CD4-positive, alpha-beta T cell (primary cell): ENCODE measurements at regions of chr1 and their contacts with region 1.

Region 1: DNA sequence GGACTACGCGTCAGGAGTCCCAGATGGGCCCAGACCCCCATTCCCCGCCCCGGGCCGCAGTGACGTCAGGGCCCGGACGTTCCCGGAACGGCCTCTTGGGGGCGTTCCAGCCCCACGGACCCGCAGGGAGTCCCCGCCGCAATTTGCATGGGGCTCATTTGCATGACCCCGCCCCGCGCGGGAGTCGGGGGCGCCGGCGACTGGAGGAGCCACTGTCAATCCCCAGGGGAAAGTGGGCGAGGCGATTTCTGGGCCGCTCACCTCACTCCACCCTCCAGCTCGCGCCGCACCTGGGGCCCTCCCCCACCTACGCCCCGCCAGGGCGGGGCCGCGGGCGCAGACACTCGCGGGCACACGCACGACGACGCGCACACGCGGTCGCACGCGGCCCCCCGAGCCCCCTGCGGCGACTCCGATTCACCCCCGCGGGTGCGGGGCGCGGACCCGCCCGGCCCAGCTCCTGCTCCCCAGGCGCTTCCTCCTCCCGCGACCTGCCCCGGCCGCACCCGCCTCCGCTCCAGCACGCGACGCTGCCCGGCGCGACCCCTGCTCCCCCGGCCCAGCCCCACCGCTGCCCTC is 13.2 kb downstream of the AGRN start:
- DNase-seq: peak; percentile 65 to 92 (median 75)
- ATAC-seq: peak; percentile 89
- H3K4me3 ChIP-seq: peak overlapping the region; percentile 40
- H3K4me3 Mint-ChIP-seq: peak overlapping the region; percentile 69
- H3K27ac ChIP-seq: no peak overlapping the region
- H3K27ac Mint-ChIP-seq: no peak overlapping the region
- H3K4me1 ChIP-seq: peaks cover 21% of the 10 kb centered on the region
- H3K4me1 Mint-ChIP-seq: peaks cover 4% of the 10 kb centered on the region
- H3K27me3 ChIP-seq: peaks cover 37 to 40% of the 10 kb centered on the region in 2 experiments
- H3K27me3 Mint-ChIP-seq: peaks cover 35% of the 10 kb centered on the region
- CTCF ChIP-seq: peak; percentile 73

Region 2: GRCh38 chr1:983799-984473 is 49.2 kb before region 1 on chr1:
- CTCF ChIA-PET with region 1: no interaction called
- POLR2A ChIA-PET with region 1: no interaction called
- intact Hi-C with region 1: no loop called
- DNase-seq: peak; percentile 43 to 79 (median 56)
- ATAC-seq: peak; percentile 84
- H3K4me3 ChIP-seq: no peak overlapping the region
- H3K4me3 Mint-ChIP-seq: no peak overlapping the region
- H3K27ac ChIP-seq: no peak overlapping the region
- H3K27ac Mint-ChIP-seq: no peak overlapping the region
- H3K4me1 ChIP-seq: peaks cover 3% of the 10 kb centered on the region
- H3K4me1 Mint-ChIP-seq: no peaks in the 10 kb centered on the region
- H3K27me3 ChIP-seq: peaks cover 0 to 14% of the 10 kb centered on the region in 2 experiments
- H3K27me3 Mint-ChIP-seq: peaks cover 19% of the 10 kb centered on the region
- CTCF ChIP-seq: peak; percentile 93

Region 3: GRCh38 chr1:1059494-1060280 is 26.6 kb after region 1 on chr1:
- CTCF ChIA-PET with region 1: interaction called, 4 read pairs
- POLR2A ChIA-PET with region 1: no interaction called
- intact Hi-C with region 1: loop called in 1 of 2 experiments (anchors 1 kb)
- DNase-seq: peak; percentile 78 to 94 (median 88)
- ATAC-seq: peak; percentile 76
- H3K4me3 ChIP-seq: peak overlapping the region; percentile 24
- H3K4me3 Mint-ChIP-seq: no peak overlapping the region
- H3K27ac ChIP-seq: no peak overlapping the region
- H3K27ac Mint-ChIP-seq: no peak overlapping the region
- H3K4me1 ChIP-seq: peaks cover 41% of the 10 kb centered on the region
- H3K4me1 Mint-ChIP-seq: peaks cover 4% of the 10 kb centered on the region
- H3K27me3 ChIP-seq: peaks cover 44 to 52% of the 10 kb centered on the region in 2 experiments
- H3K27me3 Mint-ChIP-seq: peaks cover 40% of the 10 kb centered on the region
- CTCF ChIP-seq: no peak

Region 4: GRCh38 chr1:1281533-1282321 is 248.6 kb after region 1 on chr1:
- CTCF ChIA-PET with region 1: no interaction called
- POLR2A ChIA-PET with region 1: no interaction called
- intact Hi-C with region 1: no loop called
- DNase-seq: peak in 1 of 14 experiments; percentile 40
- ATAC-seq: no peak
- H3K4me3 ChIP-seq: no peak overlapping the region
- H3K4me3 Mint-ChIP-seq: no peak overlapping the region
- H3K27ac ChIP-seq: no peak overlapping the region
- H3K27ac Mint-ChIP-seq: no peak overlapping the region
- H3K4me1 ChIP-seq: no peaks in the 10 kb centered on the region
- H3K4me1 Mint-ChIP-seq: no peaks in the 10 kb centered on the region
- H3K27me3 ChIP-seq: no peaks in the 10 kb centered on the region
- H3K27me3 Mint-ChIP-seq: no peaks in the 10 kb centered on the region
- CTCF ChIP-seq: no peak

Region 5: DNA sequence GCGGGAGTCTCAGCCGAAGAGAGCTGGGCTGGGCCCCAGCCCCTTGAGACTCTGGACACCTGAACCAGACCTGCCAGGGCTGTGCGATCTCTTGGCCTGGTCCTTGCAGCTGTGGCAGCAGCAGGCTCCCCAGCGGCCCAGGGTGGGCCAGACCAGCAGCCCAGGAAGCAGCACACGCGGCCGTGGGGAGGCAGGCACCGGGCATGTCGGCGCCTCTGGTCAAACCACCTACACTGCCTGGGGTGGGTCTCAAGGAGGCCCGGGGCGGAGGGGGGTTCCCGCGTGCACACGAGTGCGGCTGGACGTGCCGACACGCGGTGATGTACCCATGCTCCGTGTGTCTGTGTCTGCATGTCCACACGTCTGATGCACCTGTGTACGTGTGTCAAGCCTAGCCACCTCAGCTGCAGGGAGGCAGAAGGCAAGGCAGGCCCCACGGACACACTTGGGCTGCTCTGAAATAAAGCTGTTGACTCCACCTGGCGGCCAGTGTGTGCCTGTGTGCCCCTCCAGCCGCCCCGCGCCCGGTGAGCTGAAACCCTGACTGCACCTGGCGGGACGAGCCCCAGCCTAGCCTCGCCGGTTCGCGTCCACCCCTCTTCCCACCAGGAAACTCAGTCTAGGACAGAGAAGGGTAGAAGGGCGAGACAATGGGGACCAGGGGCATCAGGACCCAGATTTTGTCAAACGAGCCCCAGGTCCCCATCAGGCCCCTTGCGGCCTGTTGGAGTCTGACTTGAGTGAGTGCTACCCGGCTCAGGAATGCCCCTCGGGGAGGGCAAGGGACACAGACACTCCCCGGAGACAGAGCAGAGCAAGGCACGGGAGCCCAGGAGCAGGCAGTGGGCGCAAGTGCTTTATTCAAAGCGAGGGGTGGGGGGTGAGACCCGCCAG is 258.7 kb after region 1 on chr1:
- CTCF ChIA-PET with region 1: interaction called, 4 read pairs
- POLR2A ChIA-PET with region 1: no interaction called
- intact Hi-C with region 1: loop called in 1 of 2 experiments (anchors 5 kb)
- DNase-seq: peak; percentile 43 to 84 (median 61)
- ATAC-seq: peak; percentile 81
- H3K4me3 ChIP-seq: no peak overlapping the region
- H3K4me3 Mint-ChIP-seq: no peak overlapping the region
- H3K27ac ChIP-seq: no peak overlapping the region
- H3K27ac Mint-ChIP-seq: no peak overlapping the region
- H3K4me1 ChIP-seq: peaks cover 14% of the 10 kb centered on the region
- H3K4me1 Mint-ChIP-seq: no peaks in the 10 kb centered on the region
- H3K27me3 ChIP-seq: no peaks in the 10 kb centered on the region
- H3K27me3 Mint-ChIP-seq: no peaks in the 10 kb centered on the region
- CTCF ChIP-seq: peak; percentile 42

Region 6: DNA sequence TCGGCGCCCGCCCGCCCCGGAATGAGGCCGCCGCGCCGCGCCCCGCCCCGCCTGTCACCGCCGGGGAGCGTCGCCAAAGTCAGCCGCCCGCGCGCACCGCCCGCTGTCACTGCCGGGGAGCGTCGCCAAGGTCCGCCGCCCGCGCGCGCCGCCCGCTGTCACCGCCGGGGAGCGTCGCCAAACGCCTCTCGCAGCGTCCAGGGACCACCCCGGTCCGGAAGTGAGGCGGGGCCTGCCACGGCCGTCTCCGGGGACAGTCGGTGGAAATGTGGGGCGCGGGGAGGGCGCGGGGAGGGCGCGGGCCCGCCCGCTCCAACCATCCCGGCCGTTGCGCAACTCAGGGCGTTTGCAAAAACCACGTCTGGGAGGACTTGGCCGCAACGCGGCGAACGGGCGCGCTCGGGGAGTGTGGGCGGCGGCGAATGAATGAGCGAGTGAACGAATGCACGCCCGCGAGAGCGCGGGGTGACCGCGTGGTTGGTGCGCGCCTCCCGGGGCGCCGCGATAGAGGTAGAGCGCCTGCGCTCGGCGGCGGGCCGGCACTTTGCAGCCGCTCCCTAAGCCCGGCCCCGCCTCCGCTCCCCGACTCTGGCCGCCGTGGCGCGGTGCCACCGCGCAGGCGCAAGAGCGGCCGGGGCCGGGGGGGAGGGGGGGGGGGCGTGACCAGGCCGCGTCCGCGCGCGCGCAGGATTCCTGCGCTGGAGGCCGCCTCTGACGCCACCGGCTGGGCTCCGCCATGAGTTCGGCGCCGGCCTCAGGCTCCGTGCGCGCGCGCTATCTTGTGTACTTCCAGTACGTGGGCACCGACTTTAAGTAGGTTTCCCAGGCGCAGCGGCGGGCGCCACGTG is 275.0 kb after region 1 on chr1 and contains the starts of genes ACAP3 and PUSL1:
- CTCF ChIA-PET with region 1: no interaction called
- POLR2A ChIA-PET with region 1: no interaction called
- intact Hi-C with region 1: loop called in 1 of 2 experiments (anchors 10 kb)
- DNase-seq: peak; percentile 77 to 96 (median 86)
- ATAC-seq: peak; percentile 74
- H3K4me3 ChIP-seq: peak within 1 kb of the TSS; percentile 70
- H3K4me3 Mint-ChIP-seq: peak within 1 kb of the TSS; percentile 93
- H3K27ac ChIP-seq: peak within 1 kb of the TSS; percentile 76 to 88
- H3K27ac Mint-ChIP-seq: peak within 1 kb of the TSS; percentile 87
- H3K4me1 ChIP-seq: peaks cover 46% of the 10 kb centered on the region
- H3K4me1 Mint-ChIP-seq: peaks cover 25% of the 10 kb centered on the region
- H3K27me3 ChIP-seq: no peaks in the 10 kb centered on the region
- H3K27me3 Mint-ChIP-seq: no peaks in the 10 kb centered on the region
- CTCF ChIP-seq: no peak
- total RNA-seq, gene ACAP3: 45.3 to 46.4 TPM
- total RNA-seq, gene PUSL1: 18.1 to 19.2 TPM

Region 7: DNA sequence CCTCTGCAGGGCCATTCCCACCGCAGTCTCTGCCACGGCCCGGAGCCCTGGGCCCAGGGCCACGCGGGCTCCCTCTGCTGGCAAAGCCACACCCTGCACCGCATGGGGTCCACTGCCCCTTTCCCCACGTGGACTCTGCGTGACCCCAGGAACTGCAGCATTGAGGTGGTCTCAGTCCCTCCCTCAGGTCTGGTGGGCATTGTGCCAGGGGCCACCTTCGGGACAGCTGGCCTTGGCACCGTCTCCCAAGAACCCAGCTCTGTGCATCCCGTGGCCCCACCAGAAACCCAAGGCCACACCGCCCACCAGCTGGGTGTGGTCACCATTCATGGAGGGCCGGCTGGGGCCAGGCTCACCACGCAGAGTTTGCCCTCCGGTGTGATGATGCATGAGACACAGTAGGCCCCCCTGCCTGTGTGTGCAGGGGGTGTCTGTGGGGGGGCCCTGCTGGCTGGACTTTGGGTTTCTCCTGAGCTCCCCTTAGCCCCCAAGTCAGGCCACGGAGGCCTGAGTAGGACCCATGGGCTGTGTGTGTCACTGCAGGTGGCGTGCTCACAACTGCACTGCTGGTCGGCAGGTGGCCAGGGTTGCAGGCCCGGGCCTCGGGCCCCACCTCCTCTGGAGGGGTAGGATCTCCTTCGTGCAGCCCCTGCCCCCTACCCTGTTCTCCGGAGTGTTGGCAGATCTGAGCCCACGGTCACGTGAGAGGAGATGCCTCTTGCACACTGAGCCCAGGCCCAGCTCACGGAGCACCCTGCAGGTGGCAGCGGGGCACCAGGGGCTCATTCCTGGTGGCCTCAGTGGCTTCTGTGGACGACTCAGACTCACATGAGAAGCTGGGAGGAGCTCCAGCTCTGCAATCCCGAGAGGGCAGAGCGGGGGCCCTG is 408.1 kb after region 1 on chr1:
- CTCF ChIA-PET with region 1: no interaction called
- POLR2A ChIA-PET with region 1: no interaction called
- intact Hi-C with region 1: loop called in 1 of 2 experiments (anchors 5 kb)
- DNase-seq: peak; percentile 35 to 74 (median 49)
- ATAC-seq: peak; percentile 93
- H3K4me3 ChIP-seq: no peak overlapping the region
- H3K4me3 Mint-ChIP-seq: no peak overlapping the region
- H3K27ac ChIP-seq: no peak overlapping the region
- H3K27ac Mint-ChIP-seq: no peak overlapping the region
- H3K4me1 ChIP-seq: peaks cover 14% of the 10 kb centered on the region
- H3K4me1 Mint-ChIP-seq: peaks cover 4% of the 10 kb centered on the region
- H3K27me3 ChIP-seq: peaks cover 24 to 28% of the 10 kb centered on the region in 2 experiments
- H3K27me3 Mint-ChIP-seq: peaks cover 9% of the 10 kb centered on the region
- CTCF ChIP-seq: peak; percentile 77